SK-N-SH (cell line): ENCODE measurements at regions of chr10 and their contacts with region 1.

Region 1: DNA sequence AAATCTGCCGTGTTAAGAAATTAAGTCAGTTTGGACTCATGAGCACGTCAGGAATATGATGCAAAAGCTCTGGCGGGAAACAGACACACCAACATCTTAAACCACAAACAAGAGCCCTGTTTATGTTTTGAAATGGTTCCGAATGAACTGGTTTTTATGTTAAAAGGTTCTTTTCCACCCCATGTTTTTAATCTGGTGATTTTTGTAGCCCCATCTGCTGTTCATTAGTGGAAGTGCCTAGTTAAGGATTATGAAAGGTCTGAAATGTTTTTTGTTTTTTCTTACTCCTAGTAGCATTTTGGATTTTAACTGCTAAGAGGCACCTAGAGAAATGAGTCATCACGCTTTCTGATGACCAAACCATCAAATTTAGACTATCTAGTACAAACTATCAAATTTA is 404.1 kb upstream of the MKI67 start:
- DNase-seq: peak; percentile 58
- H3K4me3 ChIP-seq: no peak overlapping the region; a peak in 1 of 4 replicates
- H3K27ac ChIP-seq: no peak overlapping the region
- H3K4me1 ChIP-seq: peaks cover 0 to 15% of the 10 kb centered on the region in 2 experiments; a peak in 2 of 4 replicates
- H3K27me3 ChIP-seq: no peaks in the 10 kb centered on the region
- CTCF ChIP-seq: peak; percentile 37
- EP300 ChIP-seq: no peak
- RAD21 ChIP-seq: peak; percentile 53

Region 2: GRCh38 chr10:128514536-128514935 is 15.8 kb before region 1 on chr10:
- CTCF ChIA-PET with region 1: interaction called, 26 read pairs
- POLR2A ChIA-PET with region 1: no interaction called
- DNase-seq: no peak
- H3K4me3 ChIP-seq: no peak overlapping the region
- H3K27ac ChIP-seq: no peak overlapping the region
- H3K4me1 ChIP-seq: peaks cover 0 to 14% of the 10 kb centered on the region in 2 experiments; a peak in 1 of 4 replicates
- H3K27me3 ChIP-seq: no peaks in the 10 kb centered on the region
- CTCF ChIP-seq: no peak
- EP300 ChIP-seq: no peak
- RAD21 ChIP-seq: no peak

Region 3: DNA sequence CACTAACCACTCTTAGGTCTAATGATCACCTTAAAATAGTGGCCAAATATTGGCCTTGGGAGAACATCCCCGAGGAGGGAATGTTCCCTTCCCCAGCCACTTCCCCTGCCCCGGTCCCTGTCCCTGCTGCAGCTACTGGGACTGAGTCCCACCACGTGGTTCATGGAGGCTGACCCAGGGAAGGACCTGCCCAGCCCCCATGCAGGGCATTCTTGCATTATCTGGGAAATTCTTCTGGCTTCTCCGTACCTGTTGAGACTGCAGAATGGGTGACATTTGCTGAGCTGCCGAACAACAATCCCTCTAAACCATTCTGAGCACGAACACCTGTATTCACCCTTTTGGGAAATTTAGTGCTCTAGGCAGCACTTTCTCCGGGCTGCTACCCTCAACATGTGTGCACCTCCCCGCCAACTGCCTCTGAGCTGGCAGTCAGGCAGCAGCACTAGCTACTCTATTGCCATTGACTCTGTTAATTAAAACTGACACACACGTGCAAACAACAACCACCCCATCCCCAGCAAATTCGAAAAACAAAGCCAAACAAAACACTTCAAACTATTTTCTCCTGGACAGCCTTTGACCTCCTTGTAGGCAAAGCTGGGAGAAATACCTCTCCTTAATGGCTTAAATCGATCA is 163.3 kb after region 1 on chr10:
- CTCF ChIA-PET with region 1: no interaction called
- POLR2A ChIA-PET with region 1: no interaction called
- DNase-seq: no peak
- H3K4me3 ChIP-seq: no peak overlapping the region
- H3K27ac ChIP-seq: no peak overlapping the region
- H3K4me1 ChIP-seq: peaks cover 0 to 8% of the 10 kb centered on the region in 2 experiments; a peak in 1 of 4 replicates
- H3K27me3 ChIP-seq: no peaks in the 10 kb centered on the region
- CTCF ChIP-seq: no peak
- EP300 ChIP-seq: no peak
- RAD21 ChIP-seq: no peak